ENCODE measurements at regions of chr1 and their contacts with region 1.

Region 1: DNA sequence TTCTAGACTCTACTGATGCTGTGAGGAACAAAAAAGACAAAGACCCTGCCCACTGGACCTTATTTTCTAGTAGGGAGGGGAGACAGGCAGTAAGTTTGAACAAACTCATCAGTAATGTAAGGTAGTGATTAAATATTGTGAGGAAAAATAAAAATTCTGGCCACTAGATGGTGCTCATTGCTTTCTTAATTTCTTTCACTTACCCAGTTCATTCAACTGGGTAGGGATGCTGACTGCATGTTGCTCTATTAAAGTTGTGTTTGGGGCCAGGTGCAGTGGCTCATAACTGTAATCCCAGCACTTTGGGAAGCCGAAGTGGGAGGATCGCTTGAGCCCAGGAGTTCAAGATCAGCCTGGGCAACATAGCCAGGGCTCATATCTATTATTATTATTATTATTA is 6.3 kb upstream of the KYAT3 start:
- DNase-seq: no peak
- H3K4me3 ChIP-seq: no peak overlapping the region
- CTCF ChIP-seq: peak; percentile 12

Region 2: DNA sequence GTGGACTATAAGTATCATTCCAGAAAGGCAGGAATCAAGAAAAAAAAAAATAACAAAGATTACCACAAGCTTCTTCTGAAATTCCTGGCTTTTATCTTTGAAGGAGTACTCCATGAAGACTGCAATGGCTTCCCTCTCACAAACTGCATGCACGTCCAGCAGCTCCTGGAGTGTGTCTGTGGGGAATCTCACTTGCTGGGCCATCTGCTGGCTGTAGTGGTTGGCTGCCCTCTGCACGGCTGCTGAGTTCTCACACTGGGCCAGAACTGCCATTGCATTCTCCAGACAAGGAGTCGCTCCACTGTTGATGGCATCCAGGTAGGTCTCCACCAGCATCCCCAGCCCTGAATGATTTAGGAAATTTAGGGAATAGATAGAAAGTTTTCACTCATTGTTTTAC is 150.5 kb after region 1 on chr1:
- CTCF ChIA-PET with region 1: interaction called, 23 read pairs
- POLR2A ChIA-PET with region 1: no interaction called
- DNase-seq: no peak
- H3K4me3 ChIP-seq: no peak overlapping the region
- CTCF ChIP-seq: peak; percentile 66

Region 3: DNA sequence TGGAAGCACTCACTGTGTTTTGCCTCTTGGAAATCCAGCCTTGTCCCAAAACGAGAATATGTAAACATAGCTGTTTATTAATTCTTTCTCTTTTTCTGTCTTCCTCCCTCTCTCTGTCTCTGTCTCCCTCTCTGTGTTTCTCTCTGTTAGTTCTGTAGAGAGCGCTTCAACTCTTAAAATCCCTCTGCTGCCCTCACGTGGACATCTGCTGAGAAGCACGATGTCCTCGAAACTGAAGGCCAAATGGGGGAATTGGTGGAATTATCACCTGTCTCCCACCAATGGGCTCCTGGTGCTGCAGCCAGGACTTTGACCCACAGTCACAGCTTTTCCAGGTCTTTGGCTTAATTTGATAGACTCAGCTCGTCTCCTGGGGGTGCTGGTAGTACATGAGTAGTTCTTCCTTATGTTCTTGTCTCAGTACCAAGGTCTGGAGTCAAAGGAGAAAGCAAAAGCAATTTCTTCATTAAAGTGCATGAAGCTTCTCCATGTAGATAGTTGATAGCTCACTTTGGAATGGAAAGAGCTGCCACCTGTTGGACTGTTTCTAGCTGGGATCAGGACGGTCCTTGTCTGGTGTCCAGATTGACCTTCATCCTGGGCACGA is 359.7 kb after region 1 on chr1:
- CTCF ChIA-PET with region 1: interaction called, 66 read pairs
- POLR2A ChIA-PET with region 1: no interaction called
- DNase-seq: no peak
- H3K4me3 ChIP-seq: no peak overlapping the region
- CTCF ChIP-seq: peak; percentile 75